Head of caudate nucleus (tissue), 42 donors: ENCODE measurements at regions of chr14 and their contacts with region 1.

Region 1: DNA sequence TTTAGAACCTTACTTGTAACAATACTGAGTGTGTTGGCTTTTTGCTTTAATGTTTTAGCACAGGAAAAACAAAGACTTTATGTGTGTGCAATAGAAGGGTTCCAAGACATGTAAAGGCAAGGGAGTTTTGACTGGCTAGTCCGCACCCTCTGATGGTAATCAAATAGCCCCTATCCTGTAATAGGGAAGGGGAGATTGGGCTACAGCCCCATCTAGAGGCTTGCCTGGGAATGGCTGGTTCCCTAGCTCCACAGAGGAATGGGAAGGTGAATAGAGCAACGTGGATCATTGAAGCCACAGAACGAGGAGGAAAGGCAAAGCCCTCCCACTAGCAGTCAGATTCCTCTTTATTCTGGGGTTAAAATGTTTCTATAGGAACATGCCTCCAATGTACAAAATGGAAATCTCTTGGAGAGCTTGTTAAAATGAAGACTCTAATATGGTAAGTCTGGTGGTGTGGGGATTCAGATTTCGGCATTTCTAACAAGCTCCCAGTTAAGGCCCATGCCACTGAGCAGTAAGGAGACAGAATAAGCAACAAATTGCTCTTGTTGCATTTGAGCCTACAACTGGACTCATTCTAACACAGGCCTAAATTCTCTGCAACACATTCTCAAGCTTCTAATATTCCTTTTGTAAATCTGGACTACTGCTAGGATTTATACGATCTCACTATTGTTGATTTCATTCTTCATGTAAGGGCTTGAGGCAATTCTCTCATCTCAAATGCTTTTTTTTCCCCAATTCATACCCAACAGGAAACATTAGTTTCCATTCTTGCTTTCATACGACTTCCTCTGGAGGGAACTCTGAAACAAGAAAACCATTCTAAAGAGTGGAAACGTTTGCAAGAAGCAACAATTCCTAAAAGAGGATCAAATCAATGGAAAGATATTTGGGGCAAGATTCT is 57.1 kb downstream of the NIN start:
- DNase-seq: peak in 41 of 42 donors; percentile 24 to 89 (median 76)

Region 2: DNA sequence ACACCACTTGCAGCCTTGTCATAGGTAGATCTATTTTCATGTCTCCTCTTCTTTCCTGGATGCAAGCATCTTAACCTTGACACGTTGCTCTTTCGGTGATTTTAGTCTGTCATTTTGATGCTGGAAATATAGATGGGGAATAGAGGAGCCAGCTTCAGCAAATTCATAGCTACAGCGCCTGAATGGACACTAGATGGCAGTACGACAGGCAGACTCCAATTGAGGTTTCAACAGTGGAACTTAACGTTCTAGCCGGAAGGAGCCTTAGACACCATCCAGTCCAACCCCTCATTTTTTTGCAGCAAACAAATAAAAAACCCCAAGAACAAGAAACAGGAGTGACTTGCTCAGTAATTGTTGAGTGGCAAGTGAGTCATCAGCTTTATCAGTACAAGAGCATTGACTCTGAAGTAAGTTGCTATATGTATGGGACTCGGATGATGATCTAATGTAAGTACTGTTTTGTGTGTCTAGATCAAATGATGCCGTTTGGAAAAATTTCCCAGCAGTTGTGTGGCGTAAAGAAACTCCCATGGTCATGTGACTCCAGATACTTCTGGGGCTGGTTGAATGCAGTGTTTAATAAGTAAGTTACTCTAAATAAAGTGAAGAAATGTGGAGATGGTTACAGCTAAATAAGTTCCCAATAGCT is 452.8 kb before region 1 on chr14:
- intact Hi-C with region 1: loop called (anchors 10 kb)
- DNase-seq: peak in 40 of 42 donors; percentile 42 to 91 (median 79)

Region 3: DNA sequence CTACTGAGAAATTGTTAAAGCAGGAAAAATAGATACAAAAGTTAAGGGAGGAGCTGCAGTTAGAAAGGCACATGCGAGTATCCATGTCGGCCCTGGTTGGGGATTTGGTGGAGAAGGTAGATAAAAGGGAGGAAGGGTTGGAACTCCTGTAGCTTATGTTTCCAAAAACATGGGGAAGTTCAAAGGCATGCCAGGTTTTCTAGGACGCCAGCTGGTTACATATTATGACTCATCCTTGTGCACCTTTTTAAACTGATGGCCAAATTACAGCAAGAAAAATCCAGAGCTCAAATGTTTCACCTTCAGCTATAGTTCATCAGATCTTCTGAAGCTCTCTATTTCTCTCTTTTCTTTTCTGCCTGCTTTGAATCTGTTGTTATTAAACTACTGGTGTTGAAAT is 228.3 kb before region 1 on chr14:
- intact Hi-C with region 1: loop called (anchors 5 kb)
- DNase-seq: no peak

Region 4: GRCh38 chr14:50599700-50600444 is 174.0 kb before region 1 on chr14:
- intact Hi-C with region 1: loop called (anchors 10 kb)
- DNase-seq: peak in 5 of 42 donors; percentile 15 to 58 (median 36)

Region 5: DNA sequence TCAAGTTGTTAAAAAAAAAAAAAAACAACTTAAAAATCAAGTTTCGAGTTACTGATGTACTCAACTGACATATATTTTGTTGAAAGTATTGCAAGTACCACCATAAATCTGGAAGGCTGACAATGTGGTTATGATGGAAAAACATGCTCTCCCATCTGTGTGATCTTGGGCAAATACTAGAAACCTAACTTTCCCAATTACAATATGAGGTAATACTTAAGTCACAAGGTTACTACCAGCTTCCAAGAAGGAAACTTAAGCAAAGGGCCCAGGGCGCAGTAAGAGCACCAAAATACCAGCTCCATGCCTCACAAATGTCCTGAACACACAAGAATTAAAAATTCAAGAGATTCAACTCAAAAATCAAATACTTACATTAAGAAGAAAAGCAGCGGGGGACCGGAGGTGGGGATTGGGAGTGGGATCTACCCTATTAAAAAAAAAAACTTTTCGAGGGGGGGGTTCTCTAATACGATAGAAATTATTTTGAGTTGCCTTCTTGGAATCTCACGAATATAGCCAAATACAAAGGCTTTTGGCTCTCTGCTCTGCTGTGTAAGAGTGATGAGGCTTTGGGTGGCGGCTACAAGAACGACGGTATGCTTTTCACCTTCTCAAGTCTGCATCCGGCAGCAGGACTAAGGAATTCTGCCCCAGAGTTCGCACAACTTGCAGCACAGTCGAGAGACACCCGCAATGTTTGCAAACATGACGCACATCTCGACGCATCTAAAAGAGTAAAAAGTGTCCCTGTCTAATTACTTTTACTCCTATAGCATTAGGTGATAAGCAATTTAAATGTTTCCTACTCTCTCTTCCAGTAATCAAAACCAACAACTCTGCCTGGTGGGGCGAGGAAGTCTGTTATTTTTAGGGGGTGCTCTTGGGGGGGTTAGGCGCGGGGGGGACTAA is 106.9 kb before region 1 on chr14:
- intact Hi-C with region 1: no loop called
- DNase-seq: peak in 22 of 42 donors; percentile 8 to 60 (median 34)